GM10248 (cell line): ENCODE measurements at regions of chr9 and their contacts with region 1.

Region 1: DNA sequence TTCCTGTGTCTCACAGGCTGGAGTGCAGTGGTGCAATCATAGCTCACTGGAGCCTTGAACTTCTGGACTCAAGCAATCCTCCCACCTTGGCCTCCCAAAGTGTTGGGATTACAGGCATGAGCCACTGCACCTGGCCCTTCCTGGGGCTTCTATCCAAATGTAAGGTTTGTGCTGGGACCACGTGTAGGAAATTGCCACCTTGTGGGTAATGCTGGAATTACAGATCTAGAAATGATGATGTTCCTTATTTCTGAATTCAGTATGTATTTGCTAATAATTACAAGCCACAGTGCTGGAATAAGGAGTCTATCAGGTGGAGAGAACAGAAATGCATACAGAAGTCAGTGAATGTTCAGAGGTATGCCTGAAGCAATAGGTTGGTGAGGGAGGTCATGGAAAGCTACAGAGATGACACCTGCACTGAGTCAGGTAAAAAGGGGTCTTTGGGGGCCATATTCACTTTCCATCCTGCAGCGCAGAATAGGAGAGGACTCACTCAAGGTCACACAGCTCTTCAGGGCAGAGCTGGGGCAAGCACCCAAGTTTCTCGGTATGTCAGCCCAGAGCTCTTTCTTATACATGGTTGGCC is 8.8 kb upstream of the IGFBPL1 start:
- DNase-seq: no peak
- CTCF ChIP-seq: peak; percentile 59

Region 2: GRCh38 chr9:38417003-38417945 is 15.7 kb before region 1 on chr9:
- CTCF ChIA-PET with region 1: interaction called, 38 read pairs
- POLR2A ChIA-PET with region 1: no interaction called
- DNase-seq: peak; percentile 52
- CTCF ChIP-seq: peak; percentile 64

Region 3: DNA sequence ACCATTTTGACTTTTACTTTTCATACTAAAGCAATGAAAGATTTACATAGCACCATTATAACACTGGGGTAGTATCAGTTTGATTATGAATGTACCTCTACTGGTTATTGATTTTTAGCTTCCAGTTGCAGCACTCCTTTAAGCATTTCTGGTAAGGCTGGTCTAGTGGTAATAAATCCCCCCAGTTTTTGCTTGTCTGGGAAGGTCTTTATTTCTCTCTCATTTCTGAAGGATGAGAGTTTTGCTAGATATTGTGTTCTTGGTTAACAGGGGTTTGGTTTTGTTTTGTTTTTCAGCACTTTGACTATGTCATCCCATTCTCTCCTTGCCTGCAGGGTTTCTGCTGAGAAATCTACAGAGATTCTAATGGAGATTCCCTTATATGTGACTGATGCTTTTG is 18.1 kb after region 1 on chr9:
- CTCF ChIA-PET with region 1: interaction called, 16 read pairs
- POLR2A ChIA-PET with region 1: no interaction called
- DNase-seq: no peak
- CTCF ChIP-seq: no peak

Region 4: DNA sequence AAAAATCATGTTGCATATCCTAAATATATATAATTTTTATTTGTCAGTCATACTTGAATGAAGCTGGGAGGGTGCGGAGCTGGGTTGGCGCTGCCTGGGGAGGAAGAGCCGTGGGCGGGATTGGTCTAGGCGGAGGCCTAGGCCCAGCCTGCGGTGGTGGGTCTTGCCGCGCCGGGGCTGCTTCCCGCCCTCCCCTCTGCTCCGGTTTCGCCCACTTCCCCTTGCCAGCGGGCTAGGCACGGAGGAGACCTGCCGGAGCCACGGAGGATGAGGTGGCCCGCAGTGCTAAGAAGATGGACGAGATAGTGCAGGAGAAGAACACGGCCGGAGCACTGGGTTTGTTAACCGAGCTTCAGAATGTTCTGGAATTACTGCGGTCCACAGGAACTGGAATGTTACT is 45.2 kb after region 1 on chr9:
- CTCF ChIA-PET with region 1: no interaction called
- POLR2A ChIA-PET with region 1: no interaction called
- DNase-seq: no peak
- CTCF ChIP-seq: no peak